Activated CD4-positive, alpha-beta memory T cell treated with anti-CD3 and anti-CD28 coated beads for 36 hours (primary cell): ENCODE measurements at regions of chr1 and their contacts with region 1.

Region 1: DNA sequence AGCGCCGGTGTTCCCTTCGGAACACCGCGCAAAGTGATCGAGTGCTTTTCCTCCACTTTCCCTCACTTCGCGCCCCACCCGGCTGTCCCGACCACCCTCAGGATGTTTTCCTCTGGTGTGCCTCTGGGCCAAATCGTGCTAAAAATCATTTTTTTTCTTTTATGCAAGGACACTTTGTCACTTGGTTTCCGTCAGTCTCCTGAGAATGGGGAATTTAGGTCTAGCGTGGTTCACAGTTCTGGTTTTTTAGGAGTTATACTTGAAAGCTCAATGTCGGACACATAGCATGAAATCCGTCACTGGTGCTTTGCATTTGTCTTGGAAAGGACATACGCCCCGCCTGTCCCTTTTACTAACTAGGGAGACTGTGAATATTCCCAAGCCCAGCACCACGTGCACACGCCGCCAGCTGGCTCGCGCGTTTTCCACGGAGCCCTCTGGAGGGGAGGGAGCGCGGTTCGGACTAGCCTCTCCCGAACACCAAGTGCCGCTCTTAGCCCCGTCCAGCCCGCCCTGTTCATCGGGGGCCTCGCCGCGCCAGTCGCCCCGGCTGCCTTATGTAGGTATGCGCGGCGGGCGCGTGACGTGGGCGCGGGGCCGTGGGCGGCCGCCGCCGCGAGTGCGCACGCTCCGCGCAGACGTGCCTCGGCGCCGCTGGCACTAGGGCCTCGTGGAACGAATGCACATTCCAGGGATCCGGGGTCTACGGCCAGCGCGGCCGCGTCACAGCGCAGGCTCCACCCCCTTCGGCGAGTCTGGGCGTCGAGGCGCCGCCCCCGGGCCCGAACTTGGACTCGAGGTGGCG is 572 bp upstream of the IRF2BP2 start:
- DNase-seq: peak; percentile 94
- H3K4me3 Mint-ChIP-seq: peak overlapping the region; percentile 85
- H3K27ac Mint-ChIP-seq: peak overlapping the region; percentile 99
- H3K4me1 Mint-ChIP-seq: peaks cover 37% of the 10 kb centered on the region
- H3K27me3 Mint-ChIP-seq: peaks cover 5% of the 10 kb centered on the region

Region 2: DNA sequence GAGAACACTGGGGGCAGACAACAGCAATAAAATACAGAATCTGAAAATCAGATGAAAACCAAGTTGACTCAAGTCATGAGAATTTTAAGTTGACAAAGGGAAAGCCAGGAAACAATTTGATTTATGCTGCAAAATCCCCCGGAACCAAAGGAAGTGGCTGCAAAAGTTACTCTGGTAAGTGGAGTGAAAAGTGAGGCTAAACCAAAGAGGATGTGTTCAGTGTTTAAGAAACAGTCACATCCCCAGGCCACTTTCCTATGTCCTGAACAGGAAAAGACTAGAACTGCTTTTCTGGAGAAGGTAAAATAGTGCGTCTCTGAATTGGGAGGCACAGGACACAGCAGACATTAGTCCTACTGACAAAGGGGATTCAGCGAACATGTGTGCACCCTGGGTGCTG is 137.4 kb before region 1 on chr1:
- CTCF ChIA-PET with region 1: no interaction called
- POLR2A ChIA-PET with region 1: no interaction called
- intact Hi-C with region 1: no loop called
- DNase-seq: no peak
- H3K4me3 Mint-ChIP-seq: no peak overlapping the region
- H3K27ac Mint-ChIP-seq: no peak overlapping the region
- H3K4me1 Mint-ChIP-seq: peaks cover 34% of the 10 kb centered on the region
- H3K27me3 Mint-ChIP-seq: no peaks in the 10 kb centered on the region

Region 3: DNA sequence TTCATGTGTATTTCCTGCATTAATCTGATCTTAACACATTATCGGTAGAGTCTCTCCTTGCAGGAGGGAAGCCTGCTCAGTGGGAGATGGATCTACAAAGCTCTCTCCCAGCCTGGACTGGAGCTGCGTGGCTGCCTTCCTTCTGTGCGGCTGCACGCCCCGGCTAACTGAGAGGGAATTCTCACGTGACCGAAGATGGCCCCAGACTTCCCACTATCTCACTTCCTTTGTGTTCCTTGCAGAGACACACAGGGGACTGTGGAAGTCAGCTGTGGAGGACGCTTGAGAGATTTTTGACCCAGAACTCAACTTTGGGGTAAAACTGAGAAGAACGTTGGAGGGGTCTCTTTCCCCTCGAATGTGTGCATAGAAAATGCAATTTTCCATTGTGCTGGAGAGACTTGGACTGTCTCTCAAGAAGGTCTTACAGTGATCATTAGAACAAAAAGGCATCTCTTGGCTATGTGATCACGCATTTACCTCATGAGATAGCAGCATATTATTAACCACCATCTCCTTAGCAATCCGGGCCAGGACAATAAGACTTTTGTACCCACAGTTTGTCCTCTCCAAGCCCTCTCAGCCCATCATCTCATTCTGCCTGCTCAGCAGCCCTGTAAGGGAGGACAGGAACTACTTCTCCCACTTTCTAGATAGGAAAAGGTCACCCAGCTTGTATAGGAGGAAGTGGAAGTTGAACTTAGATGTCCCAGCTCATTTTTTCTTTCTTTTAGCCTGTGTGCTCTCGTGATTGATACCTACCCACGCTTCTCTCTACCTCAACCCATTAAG is 82.3 kb before region 1 on chr1:
- CTCF ChIA-PET with region 1: no interaction called
- POLR2A ChIA-PET with region 1: no interaction called
- intact Hi-C with region 1: no loop called
- DNase-seq: no peak
- H3K4me3 Mint-ChIP-seq: no peak overlapping the region
- H3K27ac Mint-ChIP-seq: no peak overlapping the region
- H3K4me1 Mint-ChIP-seq: peaks cover 4% of the 10 kb centered on the region
- H3K27me3 Mint-ChIP-seq: peaks cover 22% of the 10 kb centered on the region

Region 4: GRCh38 chr1:234628089-234628488 is 17.5 kb after region 1 on chr1:
- CTCF ChIA-PET with region 1: no interaction called
- POLR2A ChIA-PET with region 1: interaction called, 4 read pairs
- intact Hi-C with region 1: loop called (anchors 2 kb)
- DNase-seq: peak; percentile 32
- H3K4me3 Mint-ChIP-seq: no peak overlapping the region
- H3K27ac Mint-ChIP-seq: no peak overlapping the region
- H3K4me1 Mint-ChIP-seq: peaks cover 3% of the 10 kb centered on the region
- H3K27me3 Mint-ChIP-seq: no peaks in the 10 kb centered on the region

Region 5: DNA sequence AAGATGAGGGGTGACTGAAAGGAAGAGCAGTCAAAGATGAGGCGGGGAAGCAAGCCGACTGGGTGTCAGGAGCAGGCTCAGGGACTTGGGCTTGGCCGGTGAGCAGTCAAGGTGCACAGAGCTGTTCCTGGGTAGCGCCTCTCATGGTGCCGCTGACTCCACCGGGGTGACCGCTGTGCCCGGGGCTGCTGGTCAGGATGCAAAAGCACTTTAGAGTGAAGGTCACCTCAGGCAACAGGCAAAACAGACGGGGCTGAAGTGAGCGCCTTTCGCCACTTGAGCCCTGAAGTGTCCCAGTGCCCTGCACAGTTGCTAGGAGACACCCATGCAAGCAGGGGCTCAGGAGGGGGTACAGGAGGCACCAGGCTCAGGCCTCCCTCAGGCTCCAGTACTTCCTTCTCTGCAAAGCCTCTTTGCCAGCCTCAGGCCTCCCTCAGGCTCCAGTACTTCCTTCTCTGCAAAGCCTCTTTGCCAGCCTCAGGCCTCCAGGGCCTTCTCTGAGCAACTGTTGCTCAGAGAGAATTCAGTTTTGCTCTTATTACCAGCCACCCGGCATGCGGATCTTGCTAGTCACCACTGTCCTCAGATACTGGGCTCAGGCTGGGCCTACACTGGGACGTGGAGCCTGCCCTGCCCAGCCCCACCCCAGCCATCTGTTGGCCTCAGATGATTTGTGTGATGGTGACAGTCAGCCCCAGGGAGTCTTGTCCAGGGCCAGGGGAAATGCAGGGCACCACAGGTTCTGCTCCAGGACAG is 99.1 kb after region 1 on chr1:
- CTCF ChIA-PET with region 1: no interaction called
- POLR2A ChIA-PET with region 1: no interaction called
- intact Hi-C with region 1: no loop called
- DNase-seq: no peak
- H3K4me3 Mint-ChIP-seq: no peak overlapping the region
- H3K27ac Mint-ChIP-seq: no peak overlapping the region
- H3K4me1 Mint-ChIP-seq: peaks cover 11% of the 10 kb centered on the region
- H3K27me3 Mint-ChIP-seq: no peaks in the 10 kb centered on the region

Region 6: GRCh38 chr1:234758851-234759250 is 148.3 kb after region 1 on chr1:
- CTCF ChIA-PET with region 1: no interaction called
- POLR2A ChIA-PET with region 1: no interaction called
- intact Hi-C with region 1: loop called (anchors 1 kb)
- DNase-seq: peak; percentile 68
- H3K4me3 Mint-ChIP-seq: peak overlapping the region; percentile 18
- H3K27ac Mint-ChIP-seq: peak overlapping the region; percentile 64
- H3K4me1 Mint-ChIP-seq: peaks cover 24% of the 10 kb centered on the region
- H3K27me3 Mint-ChIP-seq: peaks cover 4% of the 10 kb centered on the region

Region 7: GRCh38 chr1:234853906-234854644 is 243.5 kb after region 1 on chr1:
- CTCF ChIA-PET with region 1: no interaction called
- POLR2A ChIA-PET with region 1: no interaction called
- intact Hi-C with region 1: no loop called
- DNase-seq: no peak
- H3K4me3 Mint-ChIP-seq: no peak overlapping the region
- H3K27ac Mint-ChIP-seq: no peak overlapping the region
- H3K4me1 Mint-ChIP-seq: peaks cover 33% of the 10 kb centered on the region
- H3K27me3 Mint-ChIP-seq: no peaks in the 10 kb centered on the region

Region 8: DNA sequence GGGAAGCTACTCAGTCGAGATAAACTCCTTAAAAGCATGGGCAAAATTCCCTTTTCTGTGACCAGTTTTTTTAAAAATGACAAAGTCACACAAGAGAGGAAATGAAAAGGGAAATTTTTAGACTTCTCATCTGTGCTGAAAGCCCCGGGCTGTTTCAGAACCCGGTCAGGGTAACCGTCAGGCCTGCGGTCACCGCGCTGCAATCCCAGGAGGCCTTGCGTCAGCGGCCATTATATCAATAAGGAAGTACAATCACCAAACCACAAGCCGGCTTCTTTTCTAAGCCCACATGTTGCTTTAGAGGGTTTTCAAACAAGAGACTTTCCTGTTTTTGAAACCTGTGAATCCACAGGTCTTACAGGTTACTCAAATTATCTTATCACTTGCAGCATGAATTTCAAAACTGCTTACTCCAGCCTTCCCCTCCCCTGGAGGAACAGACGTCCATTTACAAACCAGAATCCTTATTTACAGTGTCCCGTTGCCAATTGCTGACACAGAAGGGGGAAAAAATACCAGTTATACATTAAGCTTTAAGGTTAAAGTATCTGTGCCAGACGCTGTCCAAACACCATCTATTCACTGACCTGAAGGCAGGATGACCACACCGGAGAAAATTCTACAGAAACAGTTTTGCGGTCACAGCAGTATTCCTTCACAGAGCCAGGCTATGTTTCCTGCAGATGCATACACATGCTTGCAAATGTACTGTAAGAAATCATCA is 352.8 kb after region 1 on chr1:
- CTCF ChIA-PET with region 1: no interaction called
- POLR2A ChIA-PET with region 1: interaction called, 9 read pairs
- intact Hi-C with region 1: loop called (anchors 1 kb)
- DNase-seq: peak; percentile 97
- H3K4me3 Mint-ChIP-seq: peak overlapping the region; percentile 63
- H3K27ac Mint-ChIP-seq: peak overlapping the region; percentile 98
- H3K4me1 Mint-ChIP-seq: peaks cover 67% of the 10 kb centered on the region
- H3K27me3 Mint-ChIP-seq: no peaks in the 10 kb centered on the region

Region 9: DNA sequence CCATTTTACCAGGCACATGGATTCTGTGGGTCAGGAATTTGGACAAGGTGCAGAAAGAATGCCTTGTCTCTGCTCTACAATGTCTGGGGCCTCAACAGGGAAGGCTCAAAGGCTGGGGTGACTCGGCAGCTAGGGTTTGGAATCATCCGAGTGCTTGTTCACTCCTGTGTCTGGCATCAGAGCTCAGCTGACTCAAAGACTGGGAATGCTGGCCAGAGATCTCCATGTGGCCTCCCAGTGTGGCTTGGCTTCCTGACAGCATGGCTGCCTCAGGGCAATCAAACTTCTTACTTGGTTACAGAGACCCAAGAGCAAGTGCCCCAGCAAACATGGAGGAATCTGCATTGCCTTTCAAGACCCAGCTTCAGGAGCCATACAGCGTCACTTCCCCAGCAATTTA is 407.6 kb after region 1 on chr1:
- CTCF ChIA-PET with region 1: no interaction called
- POLR2A ChIA-PET with region 1: interaction called, 6 read pairs
- intact Hi-C with region 1: loop called (anchors 1 kb)
- DNase-seq: no peak
- H3K4me3 Mint-ChIP-seq: no peak overlapping the region
- H3K27ac Mint-ChIP-seq: peak overlapping the region; percentile 66
- H3K4me1 Mint-ChIP-seq: peaks cover 74% of the 10 kb centered on the region
- H3K27me3 Mint-ChIP-seq: no peaks in the 10 kb centered on the region

Region 10: GRCh38 chr1:235866913-235867845 is 1256.6 kb after region 1 on chr1:
- CTCF ChIA-PET with region 1: no interaction called
- POLR2A ChIA-PET with region 1: no interaction called
- intact Hi-C with region 1: loop called (anchors 5 kb)
- DNase-seq: peak; percentile 98
- H3K4me3 Mint-ChIP-seq: peak overlapping the region; percentile 89
- H3K27ac Mint-ChIP-seq: peak overlapping the region; percentile 98
- H3K4me1 Mint-ChIP-seq: peaks cover 45% of the 10 kb centered on the region
- H3K27me3 Mint-ChIP-seq: no peaks in the 10 kb centered on the region